Aorta (tissue), 5 donors: ENCODE measurements at regions of chr4 and their contacts with region 1.

Region 1: DNA sequence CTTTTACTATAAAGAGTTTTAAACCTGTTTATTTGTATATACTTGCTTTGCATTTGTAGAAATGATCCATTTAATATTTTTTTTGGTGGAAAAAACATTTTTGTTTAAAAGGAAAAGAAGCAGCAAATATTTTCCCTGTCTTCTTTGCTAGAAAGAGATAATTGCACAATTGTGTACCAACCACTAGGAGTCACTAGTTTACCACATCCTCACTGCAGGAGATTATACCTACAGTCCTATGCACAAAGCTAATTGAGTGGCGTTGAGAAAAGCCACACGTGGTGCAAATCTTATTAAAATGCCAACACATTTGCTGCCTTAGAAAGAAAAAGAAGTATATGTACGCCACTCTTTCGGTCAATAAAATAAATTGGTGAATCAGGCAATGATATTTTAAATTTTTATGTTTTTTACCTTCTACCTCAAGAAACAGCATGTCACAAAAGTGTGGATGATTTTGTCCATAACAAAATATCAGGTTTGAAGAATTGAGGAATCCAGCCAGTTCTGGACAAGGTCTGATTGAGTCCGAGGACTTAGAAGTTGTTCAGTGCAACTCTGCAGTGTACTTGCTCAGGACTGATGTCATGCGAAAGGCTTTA is 102.9 kb downstream of the GRXCR1 start:
- DNase-seq: no peak
- ATAC-seq: no peak
- H3K4me3 ChIP-seq: no peak overlapping the region
- H3K27ac ChIP-seq: no peak overlapping the region
- H3K4me1 ChIP-seq: no peaks in the 10 kb centered on the region
- H3K27me3 ChIP-seq: no peaks in the 10 kb centered on the region

Region 2: DNA sequence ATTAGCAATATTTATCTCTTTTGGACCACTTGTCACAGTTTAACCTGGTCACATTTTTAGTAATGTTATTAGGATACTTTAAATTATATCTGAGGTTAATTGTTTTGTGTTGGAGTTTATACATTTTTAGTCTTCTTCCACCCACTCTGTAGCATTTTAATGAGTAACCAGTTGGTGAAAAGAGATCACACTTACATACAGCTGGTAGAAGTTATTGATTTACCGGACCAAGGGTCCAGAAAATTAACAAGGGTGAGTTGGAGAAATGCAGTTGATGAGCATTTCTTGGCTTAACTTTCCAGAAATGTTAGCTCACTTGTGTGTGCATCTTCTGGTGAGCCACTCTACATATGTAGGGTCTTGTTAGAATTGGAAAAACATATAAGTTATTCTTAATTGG is 116.7 kb after region 1 on chr4:
- intact Hi-C with region 1: loop called in 1 of 2 experiments (anchors 10 kb)
- DNase-seq: no peak
- ATAC-seq: no peak
- H3K4me3 ChIP-seq: no peak overlapping the region
- H3K27ac ChIP-seq: no peak overlapping the region
- H3K4me1 ChIP-seq: no peaks in the 10 kb centered on the region
- H3K27me3 ChIP-seq: no peaks in the 10 kb centered on the region

Region 3: GRCh38 chr4:43126595-43126994 is 131.2 kb after region 1 on chr4:
- intact Hi-C with region 1: loop called in 1 of 2 experiments (anchors 10 kb)
- DNase-seq: no peak
- ATAC-seq: no peak
- H3K4me3 ChIP-seq: no peak overlapping the region
- H3K27ac ChIP-seq: no peak overlapping the region
- H3K4me1 ChIP-seq: no peaks in the 10 kb centered on the region
- H3K27me3 ChIP-seq: no peaks in the 10 kb centered on the region

Region 4: GRCh38 chr4:44629280-44629866 is 1633.9 kb after region 1 on chr4:
- intact Hi-C with region 1: loop called in 1 of 2 experiments (anchors 10 kb)
- DNase-seq: no peak
- ATAC-seq: no peak
- H3K4me3 ChIP-seq: no peak overlapping the region
- H3K27ac ChIP-seq: no peak overlapping the region
- H3K4me1 ChIP-seq: no peaks in the 10 kb centered on the region
- H3K27me3 ChIP-seq: no peaks in the 10 kb centered on the region